Naive thymus-derived CD8-positive, alpha-beta T cell (primary cell): ENCODE measurements at regions of chr20 and their contacts with region 1.

Region 1: GRCh38 chr20:35601008-35601973 is 14.3 kb upstream of the SPAG4 start:
- DNase-seq: peak; percentile 66 to 87 (median 74)
- ATAC-seq: peak; percentile 91 to 96
- H3K4me3 Mint-ChIP-seq: peak overlapping the region; percentile 74 to 86 (median 82)
- H3K27ac Mint-ChIP-seq: peak overlapping the region in 4 of 10 donors; percentile 44 to 85 (median 62)
- H3K4me1 Mint-ChIP-seq: peaks cover 1 to 17% (median 14%) of the 10 kb centered on the region in 4 donors
- H3K27me3 Mint-ChIP-seq: peaks cover 3 to 25% (median 7%) of the 10 kb centered on the region in 5 donors

Region 2: DNA sequence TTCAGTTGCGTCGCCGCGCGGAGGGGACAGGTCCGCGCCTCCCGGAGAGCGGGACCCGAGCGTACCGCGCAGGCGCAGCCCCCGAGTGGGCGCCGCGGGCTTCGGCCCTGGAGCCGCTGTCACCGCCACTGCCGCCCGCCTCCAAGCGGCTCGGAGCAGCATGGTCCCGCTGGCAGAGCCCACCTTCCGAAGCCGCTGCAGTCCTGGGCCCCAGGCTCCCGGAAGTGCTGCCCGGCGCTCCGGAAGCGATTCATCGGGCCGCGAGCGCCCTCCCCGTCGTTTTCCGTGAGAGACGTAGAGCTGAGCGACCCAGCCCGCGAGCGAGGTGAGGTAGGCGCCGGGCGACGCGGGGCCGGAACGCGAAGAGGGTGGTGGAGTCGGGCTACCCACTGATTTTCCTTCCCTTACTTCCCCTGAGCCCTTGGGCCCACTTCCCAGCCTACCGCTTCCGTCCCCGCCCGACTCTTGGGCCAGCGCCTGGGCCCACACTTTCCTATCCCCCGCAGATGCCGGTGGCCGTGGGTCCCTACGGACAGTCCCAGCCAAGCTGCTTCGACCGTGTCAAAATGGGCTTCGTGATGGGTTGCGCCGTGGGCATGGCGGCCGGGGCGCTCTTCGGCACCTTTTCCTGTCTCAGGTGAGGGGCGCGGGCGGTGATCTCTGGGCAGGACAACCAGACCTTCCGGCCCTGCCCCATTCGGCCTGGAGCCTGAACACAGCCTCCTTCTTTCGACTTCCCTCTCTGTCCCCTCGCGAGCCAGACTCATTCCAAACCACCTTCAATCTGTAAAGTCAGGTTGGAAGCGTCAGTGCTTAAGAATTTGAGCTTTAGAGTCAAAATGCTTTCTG is 98.1 kb after region 1 on chr20 and contains the starts of genes NFS1 and ROMO1:
- POLR2A ChIA-PET with region 1: interaction called, 11 read pairs
- DNase-seq: peak; percentile 73 to 92 (median 86)
- ATAC-seq: peak; percentile 83 to 92
- H3K4me3 Mint-ChIP-seq: peak within 1 kb of the TSS; percentile 85 to 98 (median 94)
- H3K27ac Mint-ChIP-seq: peak within 1 kb of the TSS; percentile 93 to 99 (median 97)
- H3K4me1 Mint-ChIP-seq: peaks cover 23 to 47% (median 38%) of the 10 kb centered on the region in 4 donors
- H3K27me3 Mint-ChIP-seq: no peaks in the 10 kb centered on the region
- polyA plus RNA-seq, gene NFS1: 8.6 to 16.6 (median 14.1) TPM
- polyA plus RNA-seq, gene ROMO1: 305 to 421 (median 381) TPM